ENCODE measurements at regions of chr9 and their contacts with region 1.

Region 1: GRCh38 chr9:38318759-38319495 is 73.6 kb upstream of the ALDH1B1 start:
- DNase-seq: no peak
- ATAC-seq: no peak
- H3K4me3 ChIP-seq: peak overlapping the region; percentile 29 to 61
- H3K27ac ChIP-seq: peak overlapping the region in 1 of 2 donors; percentile 35
- H3K4me1 ChIP-seq: peaks cover 0 to 2% of the 10 kb centered on the region in 2 donors
- H3K27me3 ChIP-seq: no peaks in the 10 kb centered on the region

Region 2: GRCh38 chr9:38227061-38227540 is 91.8 kb before region 1 on chr9:
- intact Hi-C with region 1: loop called in 1 of 2 experiments (anchors 10 kb)
- DNase-seq: peak in 1 of 2 donors; percentile 53
- ATAC-seq: no peak
- H3K4me3 ChIP-seq: no peak overlapping the region
- H3K27ac ChIP-seq: no peak overlapping the region
- H3K4me1 ChIP-seq: no peaks in the 10 kb centered on the region
- H3K27me3 ChIP-seq: no peaks in the 10 kb centered on the region

Region 3: GRCh38 chr9:38277601-38278200 is 41.2 kb before region 1 on chr9:
- intact Hi-C with region 1: no loop called
- DNase-seq: no peak
- ATAC-seq: no peak
- H3K4me3 ChIP-seq: no peak overlapping the region
- H3K27ac ChIP-seq: no peak overlapping the region
- H3K4me1 ChIP-seq: no peaks in the 10 kb centered on the region
- H3K27me3 ChIP-seq: no peaks in the 10 kb centered on the region

Measured in aorta (tissue), 5 donors.